Breast epithelium (tissue), 4 donors: ENCODE measurements at regions of chr1 and their contacts with region 1.

Region 1: GRCh38 chr1:23357138-23357908 is 12.3 kb downstream of the ZNF436 start:
- DNase-seq: no peak
- H3K4me3 ChIP-seq: no peak overlapping the region
- H3K27ac ChIP-seq: peak overlapping the region; percentile 36 to 40
- H3K4me1 ChIP-seq: no peaks in the 10 kb centered on the region
- H3K27me3 ChIP-seq: no peaks in the 10 kb centered on the region
- CTCF ChIP-seq: no peak
- POLR2A ChIP-seq: no peak

Region 2: GRCh38 chr1:22303816-22304215 is 1053.5 kb before region 1 on chr1:
- intact Hi-C with region 1: no loop called
- DNase-seq: no peak
- H3K4me3 ChIP-seq: no peak overlapping the region
- H3K27ac ChIP-seq: no peak overlapping the region
- H3K4me1 ChIP-seq: no peaks in the 10 kb centered on the region
- H3K27me3 ChIP-seq: no peaks in the 10 kb centered on the region
- CTCF ChIP-seq: no peak
- POLR2A ChIP-seq: no peak

Region 3: DNA sequence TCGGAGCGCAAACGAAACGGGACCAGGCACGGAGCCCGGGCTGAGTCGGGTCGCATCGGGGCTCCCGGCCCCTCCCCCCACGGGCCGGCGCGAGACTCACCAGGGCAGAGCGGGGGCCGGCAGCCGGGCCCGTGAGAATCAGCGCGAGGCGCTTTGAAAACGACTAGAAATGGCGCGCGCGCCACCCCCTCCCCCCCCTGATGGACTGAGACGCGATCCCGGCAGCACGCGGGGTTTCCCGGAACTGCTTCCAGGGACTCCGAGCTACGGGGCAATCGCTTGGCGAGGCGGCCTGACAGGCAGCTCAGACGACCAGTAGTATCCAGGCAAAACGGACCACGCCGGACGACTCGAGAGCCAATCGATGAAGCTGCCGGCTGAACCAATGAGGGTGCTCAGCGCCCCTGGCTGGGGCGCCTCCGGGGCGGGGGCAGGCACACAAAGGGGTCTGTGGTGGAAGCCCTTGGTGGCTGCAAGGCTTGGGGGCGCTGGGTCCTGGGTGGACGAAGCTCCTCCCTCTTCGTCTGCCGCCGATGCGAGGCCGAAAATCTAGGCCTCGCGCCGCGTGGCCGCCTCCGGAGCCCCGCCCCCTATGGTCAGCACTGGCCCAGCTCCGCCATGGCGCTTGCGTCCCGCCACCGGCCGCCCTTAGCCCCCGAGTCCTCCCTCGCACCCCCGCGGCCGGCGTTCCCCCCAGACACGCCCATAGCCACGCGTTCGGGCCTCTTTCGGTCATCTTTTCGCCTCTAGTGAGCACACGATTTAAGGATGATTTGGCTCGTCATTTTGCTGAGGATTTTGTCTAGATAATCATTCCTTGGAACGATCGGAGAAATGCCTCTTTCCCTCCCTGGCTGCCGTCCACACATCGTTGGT is 13.0 kb before region 1 on chr1 and contains the start of gene HNRNPR:
- intact Hi-C with region 1: no loop called
- DNase-seq: peak; percentile 99 to 100
- H3K4me3 ChIP-seq: peak within 1 kb of the TSS; percentile 90 to 97 (median 96)
- H3K27ac ChIP-seq: peak within 1 kb of the TSS; percentile 99
- H3K4me1 ChIP-seq: peaks cover 0 to 15% of the 10 kb centered on the region in 2 donors
- H3K27me3 ChIP-seq: no peaks in the 10 kb centered on the region
- CTCF ChIP-seq: peak in 2 of 3 donors; percentile 6 to 14
- POLR2A ChIP-seq: peak; percentile 63
- total RNA-seq, gene HNRNPR: 56.6 to 114 (median 109) TPM

Region 4: DNA sequence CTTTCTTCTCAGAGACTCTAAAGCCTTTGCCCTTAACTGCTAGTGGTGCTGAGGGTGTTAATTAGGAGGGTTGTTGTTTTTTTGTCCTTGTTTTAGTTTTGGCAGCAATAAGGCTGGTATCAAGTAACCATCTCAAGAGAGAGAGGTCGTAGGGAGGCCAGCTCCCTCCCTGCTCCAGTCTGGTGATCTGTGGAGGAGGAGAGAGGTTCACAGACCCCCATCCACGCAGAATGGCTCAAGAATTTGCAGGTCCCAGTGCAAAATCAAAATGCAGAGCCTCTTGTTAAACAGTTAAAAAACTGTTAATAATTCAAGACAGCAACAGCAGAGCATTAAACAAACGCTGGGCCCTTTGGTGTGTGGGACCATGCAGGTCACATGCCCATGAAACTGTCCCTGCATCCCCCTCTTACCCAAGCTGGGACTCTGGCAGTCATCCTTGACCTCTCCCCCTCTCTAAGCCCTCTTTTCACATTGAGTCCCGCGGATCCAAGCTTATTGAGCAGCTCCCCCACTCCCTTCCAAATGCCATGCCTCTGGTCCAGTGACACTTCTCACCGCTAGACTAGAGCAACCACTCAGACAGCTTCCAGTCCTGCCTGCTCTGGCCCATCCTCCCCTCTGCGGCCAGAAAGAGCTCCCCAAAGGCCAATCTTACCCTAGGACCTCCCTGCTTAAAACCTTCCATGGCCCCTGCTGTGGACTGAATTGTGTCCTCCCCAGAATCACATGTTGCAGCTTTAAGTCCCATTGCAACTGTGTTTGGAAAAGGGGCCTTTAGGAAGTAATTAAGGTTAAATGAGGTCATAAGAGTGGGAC is 286.6 kb after region 1 on chr1:
- intact Hi-C with region 1: loop called (anchors 2 kb)
- DNase-seq: no peak
- H3K4me3 ChIP-seq: no peak overlapping the region
- H3K27ac ChIP-seq: no peak overlapping the region
- H3K4me1 ChIP-seq: no peaks in the 10 kb centered on the region
- H3K27me3 ChIP-seq: no peaks in the 10 kb centered on the region
- CTCF ChIP-seq: no peak
- POLR2A ChIP-seq: no peak